Motor neuron (in vitro differentiated cells): ENCODE measurements at regions of chr1 and their contacts with region 1.

Region 1: GRCh38 chr1:72037745-72038343 is 244.5 kb downstream of the NEGR1 start:
- ATAC-seq: peak in 3 of 8 experiments; percentile 21 to 27 (median 23)
- H3K4me3 ChIP-seq: no peak overlapping the region
- H3K27ac ChIP-seq: no peak overlapping the region
- H3K4me1 ChIP-seq: no peaks in the 10 kb centered on the region

Region 2: DNA sequence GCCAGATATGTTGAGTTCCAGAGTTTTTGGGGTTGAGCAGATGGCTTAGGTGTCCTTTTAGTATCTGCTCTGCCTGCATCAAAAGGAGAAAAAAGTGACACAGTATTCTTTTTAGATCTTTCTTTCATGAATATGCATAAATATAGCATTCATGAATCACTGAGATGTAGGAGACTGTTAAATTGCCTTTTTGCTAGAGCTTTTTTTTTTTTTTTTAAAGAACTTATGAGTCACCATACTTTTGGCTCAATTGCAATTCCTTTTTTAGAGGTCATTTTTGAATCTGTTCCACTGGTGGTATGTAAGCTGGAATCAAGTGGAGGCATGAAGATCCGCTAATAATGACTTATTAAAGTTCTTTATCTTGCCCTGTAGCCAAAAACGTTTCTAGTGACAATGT is 476.1 kb before region 1 on chr1:
- in situ Hi-C with region 1: loop called in 1 of 9 experiments (anchors 25 kb)
- ATAC-seq: peak in 4 of 8 experiments; percentile 19 to 82 (median 42)
- H3K4me3 ChIP-seq: no peak overlapping the region
- H3K27ac ChIP-seq: no peak overlapping the region
- H3K4me1 ChIP-seq: no peaks in the 10 kb centered on the region

Region 3: DNA sequence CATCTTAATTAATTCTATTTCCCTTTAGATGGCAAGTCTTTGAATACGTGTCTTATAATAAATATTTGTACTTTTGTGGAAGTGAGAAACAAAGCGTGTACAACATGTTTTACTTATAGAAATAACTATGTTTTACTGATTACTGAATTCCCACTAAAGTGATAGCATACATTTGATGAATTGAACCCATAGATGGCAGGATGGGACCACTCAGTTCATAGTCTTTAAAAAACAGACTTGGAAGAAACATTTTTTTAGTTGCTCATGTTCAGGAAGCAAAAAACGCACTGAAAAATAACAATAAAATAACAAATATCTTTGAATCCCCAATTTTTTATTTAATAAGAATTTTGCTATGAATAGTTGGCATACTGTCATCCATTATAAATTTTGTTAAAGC is 449.9 kb before region 1 on chr1:
- in situ Hi-C with region 1: loop called in 2 of 9 experiments (anchors 25 kb)
- ATAC-seq: peak in 4 of 8 experiments; percentile 15 to 63 (median 46)
- H3K4me3 ChIP-seq: no peak overlapping the region
- H3K27ac ChIP-seq: no peak overlapping the region
- H3K4me1 ChIP-seq: peaks cover 0 to 16% of the 10 kb centered on the region in 2 donors